HepG2 (cell line): ENCODE measurements at regions of chr14 and their contacts with region 1.

Region 1: GRCh38 chr14:37583359-37584231 is 11.5 kb downstream of the FOXA1 start:
- DNase-seq: peak; percentile 54
- ATAC-seq: peak; percentile 64
- H3K4me3 ChIP-seq: peak overlapping the region; percentile 46 to 70 (median 68); a peak in 5 of 6 replicates
- H3K27ac ChIP-seq: peak overlapping the region; percentile 43
- H3K4me1 ChIP-seq: peaks cover 24% of the 10 kb centered on the region
- H3K27me3 ChIP-seq: no peaks in the 10 kb centered on the region; a peak in 1 of 5 replicates
- CTCF ChIP-seq: peak; percentile 32; the same call in 1 of the 2 replicates
- EP300 ChIP-seq: no peak
- POLR2A ChIP-seq: peak in 1 of 2 experiments; percentile 41; a peak in 2 of 4 replicates
- RAD21 ChIP-seq: peak; percentile 48

Region 2: GRCh38 chr14:37237094-37237493 is 346.5 kb before region 1 on chr14:
- CTCF ChIA-PET with region 1: no interaction called
- POLR2A ChIA-PET with region 1: interaction called, 13 read pairs
- in situ Hi-C with region 1: no loop called
- intact Hi-C with region 1: no loop called
- DNase-seq: no peak
- ATAC-seq: peak; percentile 70
- H3K4me3 ChIP-seq: no peak overlapping the region
- H3K27ac ChIP-seq: peak overlapping the region; percentile 39
- H3K4me1 ChIP-seq: peaks cover 27% of the 10 kb centered on the region
- H3K27me3 ChIP-seq: no peaks in the 10 kb centered on the region
- CTCF ChIP-seq: no peak
- EP300 ChIP-seq: no peak
- POLR2A ChIP-seq: no peak
- RAD21 ChIP-seq: no peak

Region 3: GRCh38 chr14:37329189-37330001 is 254.2 kb before region 1 on chr14:
- CTCF ChIA-PET with region 1: no interaction called
- POLR2A ChIA-PET with region 1: interaction called, 16 read pairs
- in situ Hi-C with region 1: no loop called
- intact Hi-C with region 1: no loop called
- DNase-seq: peak; percentile 92
- ATAC-seq: peak; percentile 98
- H3K4me3 ChIP-seq: peak overlapping the region in 2 of 3 experiments; percentile 23 to 26; a peak in 3 of 6 replicates
- H3K27ac ChIP-seq: peak overlapping the region; percentile 57
- H3K4me1 ChIP-seq: peaks cover 30% of the 10 kb centered on the region
- H3K27me3 ChIP-seq: no peaks in the 10 kb centered on the region
- CTCF ChIP-seq: no peak
- EP300 ChIP-seq: peak; percentile 41 to 91; a peak in 3 of 4 replicates
- POLR2A ChIP-seq: no peak
- RAD21 ChIP-seq: no peak

Region 4: DNA sequence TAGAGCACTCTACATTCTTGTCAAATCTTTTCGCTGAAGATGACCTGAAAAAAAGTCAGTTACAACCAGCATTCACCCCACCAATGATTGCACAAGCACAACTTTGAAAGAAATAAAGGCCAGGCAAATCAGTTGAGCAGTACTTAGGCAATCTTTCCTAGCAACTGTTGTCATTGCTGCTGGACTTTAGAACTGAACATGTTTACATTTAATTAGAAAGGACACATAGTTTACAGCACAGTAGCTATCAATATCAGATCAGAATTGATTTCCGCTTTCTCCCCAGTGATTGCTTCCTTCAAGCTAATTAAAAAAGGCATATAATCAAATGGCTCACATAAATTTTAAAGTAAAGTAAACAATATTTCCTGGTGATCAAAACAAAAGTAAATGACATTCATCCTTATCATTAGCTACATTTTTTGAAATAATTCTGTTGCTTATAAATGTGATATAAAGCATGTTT is 116.9 kb before region 1 on chr14:
- CTCF ChIA-PET with region 1: no interaction called
- POLR2A ChIA-PET with region 1: interaction called, 34 read pairs
- in situ Hi-C with region 1: no loop called
- intact Hi-C with region 1: no loop called
- DNase-seq: peak; percentile 100
- ATAC-seq: peak; percentile 97
- H3K4me3 ChIP-seq: peak overlapping the region in 1 of 3 experiments; percentile 12; a peak in 2 of 6 replicates
- H3K27ac ChIP-seq: peak overlapping the region; percentile 81
- H3K4me1 ChIP-seq: peaks cover 46% of the 10 kb centered on the region
- H3K27me3 ChIP-seq: no peaks in the 10 kb centered on the region
- CTCF ChIP-seq: no peak
- EP300 ChIP-seq: peak; percentile 100
- POLR2A ChIP-seq: no peak
- RAD21 ChIP-seq: peak; percentile 67

Region 5: DNA sequence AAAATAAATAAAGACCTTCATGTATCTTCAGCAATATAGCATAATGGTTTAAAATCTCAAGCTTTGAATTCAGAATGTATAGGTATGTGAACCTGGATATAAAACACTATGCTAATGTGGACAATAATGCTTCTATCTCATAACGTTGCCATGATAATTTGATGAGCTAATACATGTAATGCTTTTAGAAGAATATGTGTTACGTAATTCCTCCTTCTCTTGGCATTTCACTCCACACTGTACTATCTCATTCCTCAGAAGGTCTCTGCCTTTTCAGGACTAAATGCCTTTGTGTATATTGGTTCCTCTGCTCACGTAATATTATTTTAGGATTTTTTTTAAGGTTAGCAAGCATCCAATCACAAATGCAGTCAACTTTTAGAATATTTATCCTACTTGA is 75.1 kb before region 1 on chr14:
- CTCF ChIA-PET with region 1: no interaction called
- POLR2A ChIA-PET with region 1: no interaction called
- in situ Hi-C with region 1: no loop called
- intact Hi-C with region 1: no loop called
- DNase-seq: no peak
- ATAC-seq: no peak
- H3K4me3 ChIP-seq: no peak overlapping the region
- H3K27ac ChIP-seq: no peak overlapping the region
- H3K4me1 ChIP-seq: no peaks in the 10 kb centered on the region
- H3K27me3 ChIP-seq: no peaks in the 10 kb centered on the region
- CTCF ChIP-seq: no peak
- EP300 ChIP-seq: no peak
- POLR2A ChIP-seq: no peak
- RAD21 ChIP-seq: no peak

Region 6: DNA sequence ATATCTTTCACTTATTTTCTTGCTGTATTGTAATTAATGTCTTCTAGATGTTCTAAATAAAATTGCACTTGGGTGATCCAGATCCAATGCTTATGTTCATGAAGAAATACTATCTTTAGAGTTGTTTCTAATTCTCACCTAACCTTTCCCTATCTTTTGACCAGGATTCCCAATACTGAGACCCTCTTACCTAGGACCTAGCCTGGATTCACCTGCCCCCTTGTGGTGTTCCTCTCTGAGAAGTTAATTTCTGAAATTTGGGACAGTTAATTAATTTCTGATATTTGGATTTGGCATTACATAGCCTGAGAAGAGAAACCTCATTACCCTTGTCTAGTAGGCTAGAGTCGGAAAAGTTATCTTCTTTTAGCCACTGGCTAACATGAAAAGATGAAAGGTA is 18.0 kb before region 1 on chr14:
- CTCF ChIA-PET with region 1: no interaction called
- POLR2A ChIA-PET with region 1: interaction called, 16 read pairs
- in situ Hi-C with region 1: no loop called
- intact Hi-C with region 1: no loop called
- DNase-seq: peak; percentile 70
- ATAC-seq: peak; percentile 76
- H3K4me3 ChIP-seq: no peak overlapping the region
- H3K27ac ChIP-seq: no peak overlapping the region
- H3K4me1 ChIP-seq: peaks cover 20% of the 10 kb centered on the region
- H3K27me3 ChIP-seq: no peaks in the 10 kb centered on the region
- CTCF ChIP-seq: peak; percentile 88
- EP300 ChIP-seq: 0 out of 4 replicates have a peak, but pooled peaks of 1 of the 2 experiments have one; percentile 9
- POLR2A ChIP-seq: no peak
- RAD21 ChIP-seq: peak; percentile 92

Region 7: GRCh38 chr14:37637341-37637740 is 53.7 kb after region 1 on chr14:
- CTCF ChIA-PET with region 1: no interaction called
- POLR2A ChIA-PET with region 1: no interaction called
- in situ Hi-C with region 1: no loop called
- intact Hi-C with region 1: no loop called
- DNase-seq: no peak
- ATAC-seq: no peak
- H3K4me3 ChIP-seq: no peak overlapping the region
- H3K27ac ChIP-seq: no peak overlapping the region
- H3K4me1 ChIP-seq: no peaks in the 10 kb centered on the region
- H3K27me3 ChIP-seq: no peaks in the 10 kb centered on the region
- CTCF ChIP-seq: no peak
- EP300 ChIP-seq: no peak
- POLR2A ChIP-seq: no peak
- RAD21 ChIP-seq: no peak